ENCODE measurements at regions of chr11 and their contacts with region 1.

Region 1: GRCh38 chr11:118359295-118359958 is at the start of gene UBE4A:
- DNase-seq: peak; percentile 96 to 98 (median 96)
- H3K4me3 ChIP-seq: peak within 1 kb of the TSS; percentile 60 to 100 (median 97)
- H3K27ac ChIP-seq: peak within 1 kb of the TSS; percentile 71 to 84
- H3K4me1 ChIP-seq: peaks cover 5 to 15% (median 14%) of the 10 kb centered on the region in 4 experiments
- H3K27me3 ChIP-seq: no peaks in the 10 kb centered on the region

Region 2: DNA sequence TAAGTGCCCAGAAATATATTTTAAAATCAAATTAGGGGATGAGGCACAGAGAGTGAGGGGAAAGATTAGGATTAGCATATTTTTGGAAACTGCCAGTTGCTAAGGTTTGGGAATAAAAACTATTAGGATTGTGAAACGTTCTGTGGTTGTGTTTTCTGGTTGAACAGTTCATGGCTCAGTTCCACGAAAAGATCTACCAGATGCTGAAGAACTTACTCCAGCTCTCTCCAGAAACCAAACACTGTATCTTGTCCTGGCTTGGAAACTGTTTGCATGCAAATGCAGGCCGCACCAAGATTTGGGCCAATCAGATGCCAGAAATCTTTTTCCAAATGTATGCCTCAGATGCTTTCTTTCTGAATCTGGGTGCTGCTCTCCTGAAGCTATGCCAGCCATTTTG is 15.3 kb after region 1 on chr11:
- CTCF ChIA-PET with region 1: interaction called, 20 read pairs
- POLR2A ChIA-PET with region 1: interaction called, 3 read pairs
- DNase-seq: no peak
- H3K4me3 ChIP-seq: no peak overlapping the region
- H3K27ac ChIP-seq: no peak overlapping the region
- H3K4me1 ChIP-seq: no peaks in the 10 kb centered on the region
- H3K27me3 ChIP-seq: no peaks in the 10 kb centered on the region

Measured in common myeloid progenitor, CD34-positive (primary cell).